Activated CD4-positive, alpha-beta T cell treated with anti-CD3 and anti-CD28 coated beads for 36 hours (primary cell): ENCODE measurements at regions of chr10 and their contacts with region 1.

Region 1: GRCh38 chr10:67764012-67764822 is 68.2 kb upstream of the CTNNA3 start:
- DNase-seq: peak; percentile 96
- ATAC-seq: peak; percentile 86
- H3K4me3 Mint-ChIP-seq: peak overlapping the region; percentile 86
- H3K27ac Mint-ChIP-seq: peak overlapping the region; percentile 99
- H3K4me1 Mint-ChIP-seq: peaks cover 15% of the 10 kb centered on the region
- H3K27me3 Mint-ChIP-seq: peaks cover 2% of the 10 kb centered on the region

Region 2: DNA sequence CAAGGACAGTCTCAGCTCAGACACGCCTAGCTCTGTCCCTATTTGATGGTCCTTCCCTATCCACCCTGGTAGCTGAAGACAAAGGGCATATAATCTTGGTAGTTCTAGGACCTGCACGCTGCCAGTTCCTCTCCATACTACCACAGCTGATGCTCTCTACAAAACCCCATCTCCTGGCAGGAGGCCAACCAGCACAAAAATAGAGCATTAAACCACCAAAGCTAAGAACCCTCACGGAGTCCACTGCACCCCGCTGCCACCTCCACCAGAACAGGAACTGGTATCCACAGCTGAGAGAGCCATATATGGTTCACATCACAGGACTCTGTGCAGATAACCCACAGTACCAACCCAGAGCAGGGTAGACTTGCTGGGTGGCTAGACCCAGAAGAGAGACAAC is 539.0 kb before region 1 on chr10:
- CTCF ChIA-PET with region 1: no interaction called
- POLR2A ChIA-PET with region 1: no interaction called
- intact Hi-C with region 1: no loop called
- DNase-seq: no peak
- ATAC-seq: no peak
- H3K4me3 Mint-ChIP-seq: no peak overlapping the region
- H3K27ac Mint-ChIP-seq: no peak overlapping the region
- H3K4me1 Mint-ChIP-seq: no peaks in the 10 kb centered on the region
- H3K27me3 Mint-ChIP-seq: peaks cover 27% of the 10 kb centered on the region

Region 3: DNA sequence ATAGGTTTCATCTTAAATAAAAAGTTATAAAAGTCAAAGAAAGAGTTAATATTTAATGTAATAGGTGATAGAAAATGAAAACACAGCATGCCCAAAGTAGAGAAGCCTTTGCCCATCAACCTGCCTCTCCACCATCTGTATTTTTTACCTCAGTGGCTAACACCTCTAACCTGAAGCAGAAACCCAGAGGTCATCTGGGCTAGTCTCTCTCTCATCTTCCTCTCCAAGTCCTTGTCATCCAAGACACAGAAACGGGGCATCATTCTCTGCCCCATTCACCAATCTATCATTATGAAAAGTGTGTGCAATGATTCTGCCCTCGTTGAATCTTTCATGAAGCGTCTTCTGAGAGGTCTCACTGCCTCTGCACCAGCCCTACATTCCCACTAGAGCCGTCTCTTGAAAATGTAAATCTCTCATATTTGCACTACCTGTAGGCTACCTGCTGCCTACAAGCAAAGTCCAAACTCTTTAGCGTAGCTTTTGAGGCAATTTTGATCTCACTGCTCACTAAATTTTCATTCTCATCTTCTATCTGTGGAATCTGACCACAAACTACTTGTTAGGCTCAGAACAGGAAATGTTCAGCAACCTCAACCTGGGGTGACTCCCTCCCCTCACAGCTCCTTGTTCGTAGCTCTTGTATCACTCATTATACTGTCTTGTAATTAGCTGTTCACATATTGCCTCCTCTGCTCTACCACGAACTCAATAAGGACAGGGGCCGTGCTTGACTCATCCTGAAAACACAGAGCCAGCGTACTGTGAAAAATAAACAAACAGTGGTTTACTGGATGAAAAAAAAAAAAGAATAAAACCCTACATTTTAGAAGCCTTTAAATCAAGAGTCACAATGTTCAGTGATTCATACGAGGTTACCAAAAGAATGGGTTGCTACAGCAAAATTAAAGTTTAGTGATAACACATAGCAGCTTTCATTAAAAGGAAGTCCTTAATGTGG is 151.4 kb before region 1 on chr10:
- CTCF ChIA-PET with region 1: no interaction called
- POLR2A ChIA-PET with region 1: no interaction called
- intact Hi-C with region 1: loop called (anchors 5 kb)
- DNase-seq: peak; percentile 75
- ATAC-seq: peak; percentile 100
- H3K4me3 Mint-ChIP-seq: no peak overlapping the region
- H3K27ac Mint-ChIP-seq: peak overlapping the region; percentile 18
- H3K4me1 Mint-ChIP-seq: peaks cover 27% of the 10 kb centered on the region
- H3K27me3 Mint-ChIP-seq: no peaks in the 10 kb centered on the region

Region 4: DNA sequence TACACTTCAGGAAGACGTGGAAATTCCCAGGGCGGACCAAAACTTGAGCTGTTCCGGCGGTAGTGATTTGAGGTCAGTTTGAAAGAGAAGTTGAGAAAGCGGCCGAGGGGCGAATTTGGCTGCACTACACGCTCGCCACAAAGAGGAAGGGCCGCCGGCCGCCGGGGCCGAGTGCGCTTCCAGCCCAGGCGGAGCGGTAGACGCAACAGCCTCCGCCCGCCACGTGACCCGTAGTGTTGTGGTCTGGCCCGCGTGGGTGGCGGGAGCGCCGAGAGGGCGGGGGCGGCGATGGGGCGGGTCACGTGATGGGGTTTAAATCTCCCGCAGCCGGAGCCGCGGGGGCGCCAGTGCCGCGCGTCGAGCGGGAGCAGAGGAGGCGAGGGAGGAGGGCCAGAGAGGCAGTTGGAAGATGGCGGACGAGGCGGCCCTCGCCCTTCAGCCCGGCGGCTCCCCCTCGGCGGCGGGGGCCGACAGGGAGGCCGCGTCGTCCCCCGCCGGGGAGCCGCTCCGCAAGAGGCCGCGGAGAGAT is 120.2 kb after region 1 on chr10 and contains the start of gene SIRT1:
- CTCF ChIA-PET with region 1: no interaction called
- POLR2A ChIA-PET with region 1: no interaction called
- intact Hi-C with region 1: loop called in 1 of 2 experiments (anchors 1 kb)
- DNase-seq: peak; percentile 93
- ATAC-seq: peak; percentile 74
- H3K4me3 Mint-ChIP-seq: peak within 1 kb of the TSS; percentile 93
- H3K27ac Mint-ChIP-seq: peak within 1 kb of the TSS; percentile 93
- H3K4me1 Mint-ChIP-seq: peaks cover 25% of the 10 kb centered on the region
- H3K27me3 Mint-ChIP-seq: no peaks in the 10 kb centered on the region
- total RNA-seq, gene SIRT1: 19.6 to 23.5 TPM

Region 5: DNA sequence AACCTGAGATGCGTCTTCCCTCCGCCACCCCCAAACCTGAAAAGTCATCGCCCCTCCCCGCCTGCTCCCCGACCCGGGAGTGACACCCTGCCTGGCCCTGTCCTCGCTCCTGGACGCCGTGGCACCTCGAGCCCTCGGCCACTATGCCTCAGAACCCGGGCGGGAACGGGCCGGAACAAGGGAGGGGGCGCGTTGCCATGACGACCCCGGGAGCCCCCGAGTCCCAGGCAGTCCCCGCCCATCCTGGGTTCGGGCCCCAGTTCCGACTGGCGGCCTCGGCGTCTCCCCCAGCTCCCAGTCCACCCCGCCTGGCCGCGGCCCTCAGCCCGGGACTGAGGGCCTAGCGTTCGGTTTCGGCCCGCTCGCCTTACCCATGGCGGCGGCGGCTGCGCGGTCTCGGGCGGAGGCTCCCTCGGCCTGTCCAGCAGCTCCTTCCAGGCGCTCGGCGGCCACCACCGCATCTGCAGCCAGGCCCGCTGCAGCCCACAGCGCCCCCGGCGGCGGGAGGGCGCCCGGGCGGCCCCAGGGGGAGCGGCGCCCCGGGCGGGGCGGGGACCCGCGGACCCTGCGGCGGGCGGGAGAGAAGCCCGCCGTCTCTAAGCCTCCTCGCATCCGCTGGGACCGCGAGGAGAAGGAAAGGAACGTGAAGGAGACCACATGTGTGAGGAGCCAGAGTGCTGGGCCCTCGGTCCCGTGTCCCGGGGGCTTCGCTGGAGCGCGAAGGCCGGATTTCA is 642.8 kb after region 1 on chr10 and contains the start of gene RUFY2:
- CTCF ChIA-PET with region 1: no interaction called
- POLR2A ChIA-PET with region 1: no interaction called
- intact Hi-C with region 1: loop called in 1 of 2 experiments (anchors 2 kb)
- DNase-seq: peak; percentile 86
- ATAC-seq: peak; percentile 95
- H3K4me3 Mint-ChIP-seq: peak within 1 kb of the TSS; percentile 83
- H3K27ac Mint-ChIP-seq: peak within 1 kb of the TSS; percentile 76
- H3K4me1 Mint-ChIP-seq: peaks cover 19% of the 10 kb centered on the region
- H3K27me3 Mint-ChIP-seq: no peaks in the 10 kb centered on the region
- total RNA-seq, gene RUFY2: 9.1 to 9.5 TPM